Activated CD4-positive, alpha-beta memory T cell treated with anti-CD3 and anti-CD28 coated beads, Interleukin-2, amount 10 ng/mL, durations not matched to agents 7 days and 5 days (primary cell): ENCODE measurements at regions of chr10 and their contacts with region 1.

Region 1: GRCh38 chr10:91420868-91421267 is 10.7 kb downstream of the HECTD2 start:
- DNase-seq: no peak
- H3K4me3 Mint-ChIP-seq: no peak overlapping the region
- H3K27ac Mint-ChIP-seq: no peak overlapping the region
- H3K4me1 Mint-ChIP-seq: peaks cover 13% of the 10 kb centered on the region
- H3K27me3 Mint-ChIP-seq: no peaks in the 10 kb centered on the region

Region 2: GRCh38 chr10:91409869-91410637 is 10.8 kb before region 1 on chr10 and contains the start of gene HECTD2:
- CTCF ChIA-PET with region 1: interaction called, 11 read pairs
- POLR2A ChIA-PET with region 1: interaction called, 5 read pairs
- DNase-seq: peak; percentile 80
- H3K4me3 Mint-ChIP-seq: peak within 1 kb of the TSS; percentile 81
- H3K27ac Mint-ChIP-seq: peak within 1 kb of the TSS; percentile 87
- H3K4me1 Mint-ChIP-seq: peaks cover 17% of the 10 kb centered on the region
- H3K27me3 Mint-ChIP-seq: peaks cover 15% of the 10 kb centered on the region
- total RNA-seq, gene HECTD2: 2.6 to 2.9 TPM